Pancreas (tissue), 10 donors: ENCODE measurements at regions of chr4 and their contacts with region 1.

Region 1: GRCh38 chr4:186021461-186022167 is 47.3 kb upstream of the TLR3 start:
- DNase-seq: peak in 1 of 6 donors; percentile 27
- ATAC-seq: peak; percentile 57 to 92 (median 86)
- H3K4me3 ChIP-seq: peak overlapping the region in 1 of 4 donors; percentile 1
- H3K27ac ChIP-seq: no peak overlapping the region
- H3K4me1 ChIP-seq: no peaks in the 10 kb centered on the region
- H3K27me3 ChIP-seq: no peaks in the 10 kb centered on the region
- CTCF ChIP-seq: peak; percentile 33 to 73 (median 66)

Region 2: DNA sequence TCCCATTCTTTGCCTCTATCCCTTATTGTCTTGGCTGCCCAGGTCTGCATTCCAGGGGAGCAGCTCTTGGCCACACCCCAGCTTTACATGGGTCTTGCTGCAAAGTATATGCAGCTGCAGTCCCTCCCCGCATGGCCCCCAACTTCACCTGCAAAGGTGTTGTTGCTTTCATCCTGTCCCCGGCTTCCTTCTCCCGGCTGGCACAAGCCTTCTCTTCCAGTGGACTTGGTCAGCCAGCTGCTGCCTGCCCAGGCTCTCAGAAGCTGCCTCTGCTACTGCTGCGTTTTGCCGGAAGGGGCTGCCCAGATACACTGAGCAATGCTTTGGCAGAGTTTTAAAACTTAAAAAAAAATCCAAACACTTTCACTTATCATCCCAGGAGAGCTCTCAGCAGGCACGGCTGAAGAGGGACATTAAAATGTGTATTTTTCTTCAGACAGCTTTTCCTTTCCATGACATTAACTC is 365.1 kb before region 1 on chr4:
- intact Hi-C with region 1: loop called in 1 of 3 experiments (anchors 10 kb)
- DNase-seq: peak in 4 of 6 donors; percentile 45 to 66 (median 52)
- ATAC-seq: peak; percentile 35 to 80 (median 74)
- H3K4me3 ChIP-seq: peak overlapping the region in 2 of 4 donors; percentile 20 to 30
- H3K27ac ChIP-seq: peak overlapping the region in 3 of 4 donors; percentile 20 to 75 (median 69)
- H3K4me1 ChIP-seq: peaks cover 0 to 4% (median 4%) of the 10 kb centered on the region in 3 donors
- H3K27me3 ChIP-seq: no peaks in the 10 kb centered on the region
- CTCF ChIP-seq: no peak